Left colon (tissue), 2 donors: ENCODE measurements at regions of chr11 and their contacts with region 1.

Region 1: DNA sequence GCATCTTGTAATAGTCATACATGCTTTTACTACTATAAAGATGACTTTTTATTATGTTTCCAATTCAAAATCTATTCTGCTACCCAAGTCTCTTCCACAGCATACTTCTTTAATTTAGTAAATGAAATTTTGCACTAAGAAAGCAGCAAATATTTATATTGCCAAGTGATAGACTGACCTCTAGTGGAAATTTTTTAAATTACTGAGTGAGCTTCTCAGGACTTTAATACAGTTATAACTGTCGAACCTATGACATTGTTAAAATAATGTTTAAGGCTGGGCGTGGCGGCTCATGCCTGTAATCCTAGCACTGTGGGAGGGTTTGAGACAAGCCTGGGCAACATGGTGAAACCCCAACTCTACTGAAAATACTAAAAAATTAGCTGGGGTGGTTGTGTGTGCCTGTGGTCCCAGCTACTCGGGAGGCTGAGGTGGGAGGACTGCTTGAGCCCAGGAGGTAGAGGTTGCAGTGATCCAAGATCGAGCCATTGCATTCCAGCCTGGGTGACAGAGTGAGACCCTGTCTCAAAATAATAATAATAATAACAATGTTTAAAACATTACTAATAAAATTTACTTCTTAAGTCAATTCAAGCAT is 27.3 kb downstream of the STK33 start:
- DNase-seq: peak in 1 of 2 donors; percentile 16
- ATAC-seq: peak; percentile 76

Region 2: GRCh38 chr11:8192016-8192895 is 374.5 kb before region 1 on chr11:
- intact Hi-C with region 1: loop called in 1 of 2 experiments (anchors 10 kb)
- DNase-seq: peak in 1 of 2 donors; percentile 75
- ATAC-seq: peak; percentile 83

Region 3: GRCh38 chr11:8225589-8226036 is 341.1 kb before region 1 on chr11:
- intact Hi-C with region 1: loop called (anchors 5 to 10 kb)
- DNase-seq: peak; percentile 41 to 73
- ATAC-seq: peak; percentile 18

Region 4: GRCh38 chr11:8328848-8329330 is 237.8 kb before region 1 on chr11:
- intact Hi-C with region 1: loop called in 1 of 2 experiments (anchors 5 kb)
- DNase-seq: peak; percentile 69 to 82
- ATAC-seq: peak; percentile 93